Heart right ventricle (tissue), 16 donors: ENCODE measurements at regions of chr12 and their contacts with region 1.

Region 1: GRCh38 chr12:93569656-93570551 is 2.6 kb upstream of the SOCS2 start:
- DNase-seq: peak; percentile 87 to 93
- ATAC-seq: peak; percentile 76 to 86 (median 84)
- H3K4me3 ChIP-seq: peak overlapping the region; percentile 62 to 100 (median 91)
- H3K27ac ChIP-seq: peak overlapping the region; percentile 93 to 100 (median 96)
- H3K4me1 ChIP-seq: peaks cover 0 to 29% (median 15%) of the 10 kb centered on the region in 9 donors
- H3K27me3 ChIP-seq: peaks cover 0 to 73% (median 0%) of the 10 kb centered on the region in 7 donors
- CTCF ChIP-seq: peak; percentile 75 to 93 (median 90)

Region 2: GRCh38 chr12:93322784-93323183 is 247.1 kb before region 1 on chr12:
- intact Hi-C with region 1: no loop called
- DNase-seq: no peak
- ATAC-seq: no peak
- H3K4me3 ChIP-seq: no peak overlapping the region
- H3K27ac ChIP-seq: no peak overlapping the region
- H3K4me1 ChIP-seq: peaks cover 0 to 9% (median 0%) of the 10 kb centered on the region in 9 donors
- H3K27me3 ChIP-seq: no peaks in the 10 kb centered on the region
- CTCF ChIP-seq: no peak

Region 3: DNA sequence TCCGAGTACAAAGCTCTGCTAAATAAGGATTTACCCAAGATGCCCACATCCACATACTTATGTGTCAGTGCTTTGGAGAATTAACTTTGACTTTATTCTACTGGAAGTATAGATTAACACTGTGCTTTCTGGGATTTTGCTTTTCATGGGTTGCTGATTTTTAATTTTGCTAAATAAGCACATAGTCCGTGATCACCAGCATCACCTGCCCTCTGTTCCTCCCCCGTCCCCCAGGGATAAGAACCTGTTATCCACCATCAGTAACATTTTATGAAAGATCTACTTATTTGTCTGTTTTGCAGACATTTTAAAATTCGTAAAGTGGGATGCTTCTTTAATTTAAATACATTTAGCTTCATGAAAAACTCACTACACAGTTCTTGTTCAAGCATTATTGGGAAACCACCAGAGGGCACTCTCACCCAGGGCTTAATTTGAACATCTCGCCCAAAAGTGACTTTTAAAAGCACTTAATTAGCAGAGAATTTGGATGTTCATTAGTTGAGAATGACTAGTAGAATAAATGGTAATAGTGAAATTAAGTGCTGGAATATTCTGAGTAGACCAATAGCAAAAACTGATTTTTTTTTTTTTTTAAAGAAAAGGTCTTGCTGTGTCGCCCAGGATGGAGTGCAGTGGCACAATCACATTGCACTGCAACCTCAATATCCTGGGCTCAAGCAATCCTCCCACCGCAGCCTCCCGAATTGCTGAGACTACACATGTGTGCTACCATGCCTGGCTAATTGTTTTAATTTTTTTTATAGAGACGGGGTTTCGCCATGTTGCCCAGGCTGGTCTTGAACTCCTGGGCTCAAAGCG is 66.9 kb before region 1 on chr12:
- intact Hi-C with region 1: loop called in 8 of 10 experiments (anchors 2 to 10 kb)
- DNase-seq: peak in 1 of 2 donors; percentile 46
- ATAC-seq: no peak
- H3K4me3 ChIP-seq: no peak overlapping the region
- H3K27ac ChIP-seq: no peak overlapping the region
- H3K4me1 ChIP-seq: peaks cover 0 to 6% (median 0%) of the 10 kb centered on the region in 9 donors
- H3K27me3 ChIP-seq: no peaks in the 10 kb centered on the region
- CTCF ChIP-seq: peak; percentile 67 to 89 (median 82)

Region 4: GRCh38 chr12:93742110-93742934 is 172.4 kb after region 1 on chr12:
- intact Hi-C with region 1: loop called (anchors 1 to 10 kb)
- DNase-seq: peak; percentile 75 to 80
- ATAC-seq: peak; percentile 88 to 96 (median 90)
- H3K4me3 ChIP-seq: peak overlapping the region; percentile 16 to 68 (median 64)
- H3K27ac ChIP-seq: peak overlapping the region; percentile 86 to 95 (median 91)
- H3K4me1 ChIP-seq: peaks cover 5 to 88% (median 74%) of the 10 kb centered on the region in 9 donors
- H3K27me3 ChIP-seq: no peaks in the 10 kb centered on the region
- CTCF ChIP-seq: peak in 8 of 9 donors; percentile 11 to 57 (median 44)

Region 5: DNA sequence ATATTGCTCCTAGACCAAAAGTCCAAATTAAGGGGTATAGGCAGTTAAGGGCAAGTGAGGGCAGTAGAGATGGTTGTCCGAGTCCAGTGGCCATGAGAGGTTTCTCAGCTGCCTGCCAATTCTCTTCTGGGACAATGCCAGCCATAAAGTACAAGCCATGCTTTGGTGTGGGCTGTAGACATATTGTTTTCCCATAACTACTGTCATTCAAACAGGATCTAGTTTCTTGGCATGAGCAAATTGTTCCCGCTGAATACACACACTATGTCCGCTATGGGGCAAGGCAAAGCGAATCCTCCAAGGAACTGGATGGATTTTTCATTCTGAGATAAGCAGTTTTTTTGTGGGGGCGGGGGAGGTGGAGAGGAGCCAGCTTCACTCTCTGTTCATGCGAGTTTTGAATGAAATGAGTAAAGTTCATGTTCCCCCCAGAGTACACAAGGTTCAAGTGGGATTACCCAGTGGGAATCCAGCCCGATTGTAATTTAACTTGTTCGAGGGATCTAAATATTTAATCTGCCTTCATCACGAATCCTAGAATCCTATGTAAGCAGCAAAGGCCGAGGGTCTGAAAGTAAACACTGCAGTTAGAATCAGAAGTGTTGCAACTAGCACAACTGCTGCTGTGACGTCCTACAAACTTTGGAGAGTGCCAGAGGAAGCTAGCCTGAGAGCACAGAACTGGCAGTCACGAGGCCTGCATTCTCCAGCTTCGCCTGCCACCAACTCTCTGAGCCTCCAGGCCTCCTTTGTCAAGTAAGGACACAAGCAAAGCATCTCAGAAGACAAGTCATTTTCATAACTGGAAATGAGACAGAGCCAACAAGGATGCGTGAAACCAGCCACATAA is 244.3 kb after region 1 on chr12:
- intact Hi-C with region 1: loop called in 2 of 10 experiments (anchors 10 kb)
- DNase-seq: peak; percentile 74 to 86
- ATAC-seq: peak; percentile 80 to 94 (median 90)
- H3K4me3 ChIP-seq: peak overlapping the region in 7 of 10 donors; percentile 1 to 29 (median 18)
- H3K27ac ChIP-seq: peak overlapping the region; percentile 80 to 96 (median 90)
- H3K4me1 ChIP-seq: peaks cover 25 to 73% (median 62%) of the 10 kb centered on the region in 9 donors
- H3K27me3 ChIP-seq: no peaks in the 10 kb centered on the region
- CTCF ChIP-seq: peak in 3 of 9 donors; percentile 11 to 26 (median 12)

Region 6: DNA sequence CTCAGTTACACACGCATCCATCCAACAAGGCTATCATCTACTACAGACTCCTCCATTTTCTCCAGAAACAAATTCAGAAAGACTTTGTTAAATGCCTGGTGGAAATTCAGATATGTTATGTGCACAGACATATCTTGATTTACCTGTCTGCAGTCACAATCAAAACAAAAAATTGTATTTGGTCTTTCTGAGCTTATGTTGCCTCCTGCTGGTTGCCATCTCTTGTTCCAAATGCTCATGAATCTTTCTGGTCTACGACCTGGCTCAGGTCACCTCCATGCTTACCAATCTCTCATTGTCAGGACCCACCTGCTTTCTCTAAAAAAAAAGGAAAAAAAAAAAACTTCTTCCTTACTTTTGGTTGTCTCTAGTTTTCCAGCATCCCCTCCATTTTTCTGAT is 409.3 kb after region 1 on chr12:
- intact Hi-C with region 1: loop called in 9 of 10 experiments (anchors 1 to 10 kb)
- DNase-seq: peak in 1 of 2 donors; percentile 19
- ATAC-seq: peak in 3 of 8 donors; percentile 49 to 57 (median 54)
- H3K4me3 ChIP-seq: no peak overlapping the region
- H3K27ac ChIP-seq: no peak overlapping the region
- H3K4me1 ChIP-seq: peaks cover 0 to 21% (median 3%) of the 10 kb centered on the region in 9 donors
- H3K27me3 ChIP-seq: no peaks in the 10 kb centered on the region
- CTCF ChIP-seq: peak in 8 of 9 donors; percentile 29 to 76 (median 58)

Region 7: GRCh38 chr12:94101738-94102660 is 532.1 kb after region 1 on chr12:
- intact Hi-C with region 1: loop called (anchors 1 to 5 kb)
- DNase-seq: peak; percentile 78 to 88
- ATAC-seq: peak; percentile 83 to 94 (median 90)
- H3K4me3 ChIP-seq: peak overlapping the region; percentile 16 to 90 (median 66)
- H3K27ac ChIP-seq: peak overlapping the region in 8 of 10 donors; percentile 2 to 80 (median 68)
- H3K4me1 ChIP-seq: peaks cover 0 to 26% (median 12%) of the 10 kb centered on the region in 9 donors
- H3K27me3 ChIP-seq: peaks cover 0 to 21% (median 0%) of the 10 kb centered on the region in 7 donors
- CTCF ChIP-seq: peak; percentile 61 to 94 (median 86)

Region 8: GRCh38 chr12:94941440-94941862 is 1371.5 kb after region 1 on chr12:
- intact Hi-C with region 1: no loop called
- DNase-seq: peak; percentile 40 to 61
- ATAC-seq: peak; percentile 87 to 98 (median 94)
- H3K4me3 ChIP-seq: no peak overlapping the region
- H3K27ac ChIP-seq: peak overlapping the region in 9 of 10 donors; percentile 11 to 70 (median 48)
- H3K4me1 ChIP-seq: peaks cover 0 to 23% (median 15%) of the 10 kb centered on the region in 9 donors
- H3K27me3 ChIP-seq: no peaks in the 10 kb centered on the region
- CTCF ChIP-seq: no peak